ENCODE measurements at regions of chr5 and their contacts with region 1.

Region 1: DNA sequence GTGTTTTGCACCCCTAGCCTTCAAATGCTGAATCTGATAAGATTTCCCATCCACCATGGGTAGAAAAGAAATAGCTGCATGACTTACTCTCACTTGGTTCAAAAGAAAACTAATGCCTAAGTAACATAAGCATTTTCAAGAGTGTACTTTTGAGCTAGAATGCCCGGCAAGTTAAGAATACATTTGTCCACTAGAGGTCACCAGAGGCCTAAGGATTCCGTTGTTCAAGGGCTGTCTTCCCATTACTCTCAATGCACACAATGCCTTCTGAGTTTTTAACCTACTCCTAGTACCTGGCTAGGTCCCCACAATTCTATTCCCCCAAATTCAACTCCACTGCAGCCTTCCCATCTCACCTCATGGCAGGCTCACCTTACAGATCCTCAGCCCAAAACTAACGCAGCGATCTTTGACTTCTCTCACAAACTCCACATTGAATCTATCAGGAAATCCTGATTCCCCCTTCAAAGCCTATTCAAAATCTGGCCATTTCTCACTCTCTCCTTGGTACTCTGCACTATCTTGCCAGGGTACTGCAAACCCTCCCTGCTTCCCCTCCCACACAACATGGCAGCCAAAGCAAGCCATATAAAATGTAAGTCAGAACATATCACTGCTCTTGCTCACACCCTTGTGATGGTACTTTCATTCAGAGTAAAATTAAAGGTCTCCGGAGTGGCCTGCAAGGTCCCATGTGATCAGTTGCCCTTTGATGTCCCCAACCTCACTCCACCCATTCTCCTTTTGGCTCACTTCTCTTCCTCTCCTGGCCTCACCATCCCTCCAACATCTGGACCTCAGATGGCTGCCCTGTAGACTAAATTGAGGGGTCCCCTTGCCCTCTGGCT is 13.4 kb downstream of the OXCT1 start:
- DNase-seq: peak; percentile 14
- ATAC-seq: peak; percentile 78
- H3K4me3 Mint-ChIP-seq: no peak overlapping the region
- H3K27ac Mint-ChIP-seq: no peak overlapping the region
- H3K4me1 Mint-ChIP-seq: no peaks in the 10 kb centered on the region
- H3K27me3 Mint-ChIP-seq: no peaks in the 10 kb centered on the region
- CTCF ChIP-seq: no peak

Region 2: GRCh38 chr5:41903892-41904799 is 47.3 kb after region 1 on chr5 and contains the start of gene RIMOC1:
- CTCF ChIA-PET with region 1: interaction called, 7 read pairs
- POLR2A ChIA-PET with region 1: interaction called, 5 read pairs
- intact Hi-C with region 1: loop called (anchors 1 kb)
- DNase-seq: peak; percentile 97
- ATAC-seq: peak; percentile 92
- H3K4me3 Mint-ChIP-seq: peak within 1 kb of the TSS; percentile 99
- H3K27ac Mint-ChIP-seq: peak within 1 kb of the TSS; percentile 99
- H3K4me1 Mint-ChIP-seq: peaks cover 34% of the 10 kb centered on the region
- H3K27me3 Mint-ChIP-seq: peaks cover 4% of the 10 kb centered on the region
- CTCF ChIP-seq: no peak
- total RNA-seq, gene RIMOC1: 26.0 and 30.2 TPM in 2 replicates

Region 3: DNA sequence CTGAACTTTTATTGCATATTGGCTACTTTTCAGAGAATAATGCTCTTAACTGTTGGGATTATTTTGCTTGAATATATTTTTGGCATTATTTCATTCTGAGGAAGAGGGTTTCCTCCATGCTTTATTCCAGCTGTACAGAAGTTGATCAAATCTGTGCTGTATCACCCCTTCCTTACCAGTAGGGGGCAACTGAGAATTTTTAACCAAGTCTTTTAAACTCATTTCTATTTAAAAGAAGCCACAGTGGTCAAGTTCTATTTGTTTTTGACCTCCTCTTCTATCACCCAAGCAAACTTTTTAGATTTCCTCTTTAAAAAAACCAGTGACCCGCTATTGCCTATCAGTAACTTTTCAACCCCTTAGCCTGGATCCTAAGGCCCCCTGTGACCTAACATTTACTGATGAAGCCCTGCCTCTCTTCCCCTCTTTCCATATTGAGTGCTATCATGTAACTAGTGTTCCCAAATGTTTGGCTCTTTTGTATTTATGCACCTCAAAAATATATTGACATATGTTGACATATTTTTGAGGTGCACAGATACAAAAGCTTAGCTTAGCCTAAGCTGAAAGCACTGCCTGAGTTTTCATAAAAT is 148.8 kb after region 1 on chr5:
- CTCF ChIA-PET with region 1: interaction called, 5 read pairs
- POLR2A ChIA-PET with region 1: no interaction called
- intact Hi-C with region 1: loop called (anchors 1 kb)
- DNase-seq: no peak
- ATAC-seq: peak; percentile 61
- H3K4me3 Mint-ChIP-seq: no peak overlapping the region
- H3K27ac Mint-ChIP-seq: no peak overlapping the region
- H3K4me1 Mint-ChIP-seq: no peaks in the 10 kb centered on the region
- H3K27me3 Mint-ChIP-seq: no peaks in the 10 kb centered on the region
- CTCF ChIP-seq: peak; percentile 66

Region 4: DNA sequence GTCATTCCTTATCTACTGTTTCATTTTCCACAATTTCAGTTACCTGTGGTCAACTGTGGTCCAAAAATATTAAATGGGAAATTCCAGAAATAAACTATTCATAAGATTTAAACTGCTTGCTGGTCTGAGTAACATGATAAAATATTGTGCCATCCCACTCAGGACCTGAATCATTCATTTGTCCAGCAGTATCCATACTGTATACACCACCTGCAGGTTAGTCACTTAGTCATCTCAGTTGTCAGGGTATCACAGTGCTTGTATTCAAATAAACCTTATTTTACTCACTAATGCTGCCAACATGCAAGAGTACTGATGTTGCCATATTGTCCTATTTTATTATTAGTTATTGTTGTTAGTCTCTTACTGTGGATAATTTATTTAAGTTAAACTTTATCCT is 208.0 kb after region 1 on chr5:
- CTCF ChIA-PET with region 1: interaction called, 302 read pairs
- POLR2A ChIA-PET with region 1: no interaction called
- intact Hi-C with region 1: no loop called
- DNase-seq: no peak
- ATAC-seq: no peak
- H3K4me3 Mint-ChIP-seq: no peak overlapping the region
- H3K27ac Mint-ChIP-seq: no peak overlapping the region
- H3K4me1 Mint-ChIP-seq: no peaks in the 10 kb centered on the region
- H3K27me3 Mint-ChIP-seq: peaks cover 1% of the 10 kb centered on the region
- CTCF ChIP-seq: no peak

Region 5: DNA sequence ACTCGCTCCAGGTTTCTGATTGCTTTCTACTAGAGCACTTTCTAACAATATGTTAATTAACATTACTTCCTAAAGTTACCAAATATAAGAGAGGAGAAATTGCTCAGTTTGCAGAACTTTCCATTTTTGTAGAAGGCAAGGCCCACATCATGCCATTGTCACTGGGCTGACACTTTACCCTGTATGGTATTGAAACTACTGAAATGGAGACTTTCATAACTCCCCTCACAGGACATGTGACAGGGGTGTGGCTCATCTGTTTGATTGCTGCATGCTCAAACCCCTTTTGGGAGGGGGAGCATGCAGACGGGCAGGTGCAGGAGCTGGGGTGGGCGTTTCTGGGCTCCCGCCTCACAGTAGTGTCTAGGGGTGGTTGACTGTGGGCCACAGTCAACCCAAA is 360.0 kb after region 1 on chr5:
- CTCF ChIA-PET with region 1: no interaction called
- POLR2A ChIA-PET with region 1: no interaction called
- intact Hi-C with region 1: no loop called
- DNase-seq: no peak
- ATAC-seq: no peak
- H3K4me3 Mint-ChIP-seq: no peak overlapping the region
- H3K27ac Mint-ChIP-seq: no peak overlapping the region
- H3K4me1 Mint-ChIP-seq: no peaks in the 10 kb centered on the region
- H3K27me3 Mint-ChIP-seq: no peaks in the 10 kb centered on the region
- CTCF ChIP-seq: no peak

Region 6: GRCh38 chr5:42656651-42657015 is 799.8 kb after region 1 on chr5:
- CTCF ChIA-PET with region 1: no interaction called
- POLR2A ChIA-PET with region 1: no interaction called
- intact Hi-C with region 1: loop called (anchors 5 kb)
- DNase-seq: no peak
- ATAC-seq: no peak
- H3K4me3 Mint-ChIP-seq: no peak overlapping the region
- H3K27ac Mint-ChIP-seq: no peak overlapping the region
- H3K4me1 Mint-ChIP-seq: peaks cover 7% of the 10 kb centered on the region
- H3K27me3 Mint-ChIP-seq: peaks cover 10% of the 10 kb centered on the region
- CTCF ChIP-seq: no peak

Region 7: GRCh38 chr5:42889311-42889933 is 1032.6 kb after region 1 on chr5:
- CTCF ChIA-PET with region 1: interaction called, 9 read pairs
- POLR2A ChIA-PET with region 1: no interaction called
- intact Hi-C with region 1: loop called (anchors 1 kb)
- DNase-seq: no peak
- ATAC-seq: peak; percentile 60
- H3K4me3 Mint-ChIP-seq: no peak overlapping the region
- H3K27ac Mint-ChIP-seq: no peak overlapping the region
- H3K4me1 Mint-ChIP-seq: no peaks in the 10 kb centered on the region
- H3K27me3 Mint-ChIP-seq: peaks cover 11% of the 10 kb centered on the region
- CTCF ChIP-seq: peak; percentile 69

Measured in activated B cell treated with CpG ODN at 0.5 μM for 24 hours (primary cell).